Gastrocnemius medialis (tissue), 4 donors: ENCODE measurements at regions of chr22 and their contacts with region 1.

Region 1: GRCh38 chr22:50209893-50210292 is 9.1 kb downstream of the SELENOO start:
- DNase-seq: peak in 1 of 2 donors; percentile 64
- ATAC-seq: peak in 1 of 2 donors; percentile 19
- H3K4me3 ChIP-seq: no peak overlapping the region
- H3K27ac ChIP-seq: peak overlapping the region in 1 of 4 donors; percentile 83
- H3K4me1 ChIP-seq: peaks cover 20 to 26% of the 10 kb centered on the region in 2 donors
- H3K27me3 ChIP-seq: no peaks in the 10 kb centered on the region
- CTCF ChIP-seq: peak; percentile 54 to 87 (median 77)
- POLR2A ChIP-seq: no peak

Region 2: DNA sequence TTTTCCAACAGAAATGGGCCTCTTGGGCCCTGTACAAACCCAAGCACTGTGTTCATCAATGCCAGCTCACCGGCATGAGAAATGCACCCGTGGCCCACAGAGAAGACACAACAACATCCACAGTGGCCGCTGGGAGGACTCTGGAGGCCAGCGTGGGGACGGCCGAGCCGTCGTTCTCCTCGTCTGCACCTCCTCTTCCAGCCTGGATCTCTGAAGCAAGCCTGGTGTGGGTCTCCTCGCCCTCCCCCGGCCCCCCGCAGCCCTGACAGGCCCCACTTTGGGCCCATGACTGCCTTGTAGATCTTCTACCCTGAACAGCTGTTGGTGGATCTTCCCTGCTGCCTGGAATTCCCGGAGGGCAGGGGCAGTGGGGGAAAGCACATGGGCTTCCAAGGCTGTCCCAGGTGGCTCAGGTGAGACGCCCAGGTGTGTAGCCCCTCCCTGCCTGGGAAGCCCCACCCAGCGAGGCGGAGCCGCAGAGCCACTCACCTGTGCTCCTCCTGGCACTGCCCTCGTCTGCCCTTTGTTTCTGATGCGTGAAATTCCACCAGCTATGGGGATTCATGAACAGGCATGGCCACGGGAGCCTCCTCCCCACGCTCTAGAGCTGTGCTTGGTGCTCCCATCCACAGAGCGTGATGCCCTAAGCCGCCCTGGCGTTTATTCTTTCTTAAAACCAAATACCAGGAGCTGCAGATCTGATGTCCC is 608.1 kb before region 1 on chr22:
- in situ Hi-C with region 1: no loop called
- intact Hi-C with region 1: no loop called
- DNase-seq: no peak
- ATAC-seq: no peak
- H3K4me3 ChIP-seq: no peak overlapping the region
- H3K27ac ChIP-seq: no peak overlapping the region
- H3K4me1 ChIP-seq: no peaks in the 10 kb centered on the region
- H3K27me3 ChIP-seq: no peaks in the 10 kb centered on the region
- CTCF ChIP-seq: no peak
- POLR2A ChIP-seq: no peak

Region 3: DNA sequence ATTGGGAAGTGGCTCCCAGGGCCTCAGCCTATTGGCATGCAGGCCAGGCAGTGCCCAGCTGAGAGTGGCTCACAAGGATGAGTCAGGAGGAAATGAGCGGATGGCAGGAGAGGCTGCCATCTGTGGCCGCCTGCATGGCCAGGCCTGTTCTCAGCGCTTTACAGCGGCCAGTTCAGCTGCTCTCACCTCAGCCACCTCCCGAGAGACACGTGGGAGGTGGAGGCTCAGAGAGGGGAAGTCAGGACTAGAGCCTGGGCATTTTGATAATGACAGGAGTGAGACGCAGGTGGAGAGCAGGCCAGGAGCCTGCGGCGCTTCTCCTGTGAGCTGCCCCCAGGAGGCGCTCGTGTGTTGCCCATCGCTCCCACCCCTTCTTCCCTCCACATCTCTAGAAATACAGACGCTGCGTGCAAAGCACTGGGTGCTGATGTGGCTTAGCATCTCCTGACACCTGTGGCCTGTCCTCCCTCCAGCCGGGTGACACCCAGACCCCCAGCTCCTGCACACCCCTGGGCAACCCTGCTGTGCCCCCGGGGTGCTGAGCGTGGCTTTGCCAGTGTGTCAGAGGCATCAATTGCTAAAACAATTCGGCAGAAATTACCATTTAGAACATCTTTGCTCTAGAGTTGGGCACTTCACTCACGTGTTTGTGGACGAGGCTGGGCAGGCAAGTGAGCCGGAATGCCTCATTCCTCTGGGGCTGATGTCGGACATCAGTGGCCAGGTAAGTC is 60.7 kb before region 1 on chr22:
- in situ Hi-C with region 1: no loop called
- intact Hi-C with region 1: loop called (anchors 5 kb)
- DNase-seq: no peak
- ATAC-seq: peak in 1 of 2 donors; percentile 62
- H3K4me3 ChIP-seq: no peak overlapping the region
- H3K27ac ChIP-seq: no peak overlapping the region
- H3K4me1 ChIP-seq: no peaks in the 10 kb centered on the region
- H3K27me3 ChIP-seq: peaks cover 0 to 8% (median 0%) of the 10 kb centered on the region in 3 donors
- CTCF ChIP-seq: peak in 4 of 5 experiments; percentile 34 to 55 (median 48)
- POLR2A ChIP-seq: no peak

Region 4: DNA sequence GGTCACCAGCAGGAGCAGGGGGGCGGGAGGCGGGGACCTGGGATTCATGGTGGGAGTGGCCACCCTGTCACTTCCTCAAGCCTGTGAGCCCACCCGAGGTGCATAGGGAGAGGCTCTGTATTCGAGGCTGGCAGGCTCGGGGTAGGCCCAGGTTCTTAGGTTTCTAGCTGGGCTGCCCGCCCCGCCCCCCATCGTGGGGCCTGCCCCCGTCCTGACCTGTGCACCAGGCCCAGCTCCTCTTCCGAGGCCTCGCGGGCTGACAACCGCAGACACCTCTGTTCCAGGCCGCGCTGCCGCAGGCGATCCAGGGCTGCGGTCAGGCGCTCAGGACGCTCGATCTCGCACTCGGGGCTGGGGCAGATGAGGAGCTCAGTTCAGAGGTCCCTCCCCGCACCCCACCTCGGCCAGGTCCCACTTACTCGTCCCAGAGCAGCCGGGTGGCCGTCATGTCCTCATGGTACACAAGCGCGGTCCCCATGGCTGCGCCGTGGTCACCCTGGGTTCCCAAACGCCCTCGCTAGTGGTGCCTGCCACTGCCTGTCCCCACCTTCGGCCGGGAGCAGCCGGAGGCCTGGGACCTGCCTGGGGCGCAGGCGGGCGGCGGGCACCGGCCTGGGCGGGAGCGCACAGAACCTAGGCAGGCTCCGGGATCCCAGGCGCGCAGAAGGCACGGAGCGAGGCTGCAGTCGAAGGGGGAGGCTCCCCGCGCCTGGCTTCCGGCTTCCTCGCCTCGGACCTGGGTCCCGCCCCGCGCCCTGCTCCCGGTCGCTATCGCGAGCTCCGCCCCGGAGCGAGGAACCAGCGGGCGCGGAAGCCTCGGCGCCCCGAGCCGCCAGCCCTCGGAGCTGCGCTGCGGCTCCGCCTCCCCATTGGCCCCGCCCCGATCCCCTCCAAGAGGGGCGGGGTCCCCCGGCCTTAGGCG is 40.9 kb after region 1 on chr22 and contains the start of gene HDAC10:
- in situ Hi-C with region 1: no loop called
- intact Hi-C with region 1: loop called (anchors 5 kb)
- DNase-seq: peak in 1 of 2 donors; percentile 43
- ATAC-seq: peak; percentile 11 to 30
- H3K4me3 ChIP-seq: peak within 1 kb of the TSS; percentile 59 to 68 (median 62)
- H3K27ac ChIP-seq: peak within 1 kb of the TSS; percentile 62 to 97 (median 75)
- H3K4me1 ChIP-seq: peaks cover 18 to 30% of the 10 kb centered on the region in 2 donors
- H3K27me3 ChIP-seq: no peaks in the 10 kb centered on the region
- CTCF ChIP-seq: no peak
- POLR2A ChIP-seq: no peak
- total RNA-seq, gene HDAC10: 4.1 to 24.9 (median 8.6) TPM

Region 5: GRCh38 chr22:50347157-50347556 is 137.3 kb after region 1 on chr22:
- in situ Hi-C with region 1: no loop called
- intact Hi-C with region 1: loop called (anchors 1 kb)
- DNase-seq: no peak
- ATAC-seq: no peak
- H3K4me3 ChIP-seq: no peak overlapping the region
- H3K27ac ChIP-seq: no peak overlapping the region
- H3K4me1 ChIP-seq: peaks cover 13 to 21% of the 10 kb centered on the region in 2 donors
- H3K27me3 ChIP-seq: no peaks in the 10 kb centered on the region
- CTCF ChIP-seq: no peak
- POLR2A ChIP-seq: no peak